ENCODE measurements at regions of chr20 and their contacts with region 1.

Region 1: GRCh38 chr20:45456632-45457031 is 12.9 kb upstream of the WFDC2 start:
- DNase-seq: peak; percentile 68 to 73
- H3K4me3 ChIP-seq: no peak overlapping the region
- H3K4me3 Mint-ChIP-seq: no peak overlapping the region
- H3K27ac Mint-ChIP-seq: no peak overlapping the region
- H3K4me1 ChIP-seq: no peaks in the 10 kb centered on the region
- H3K4me1 Mint-ChIP-seq: no peaks in the 10 kb centered on the region
- H3K27me3 ChIP-seq: no peaks in the 10 kb centered on the region
- H3K27me3 Mint-ChIP-seq: no peaks in the 10 kb centered on the region
- CTCF ChIP-seq: peak in 1 of 2 experiments; percentile 60

Region 2: GRCh38 chr20:45229264-45230056 is 227.2 kb before region 1 on chr20:
- CTCF ChIA-PET with region 1: interaction called, 10 read pairs
- POLR2A ChIA-PET with region 1: no interaction called
- intact Hi-C with region 1: no loop called
- DNase-seq: peak; percentile 68 to 81
- H3K4me3 ChIP-seq: no peak overlapping the region
- H3K4me3 Mint-ChIP-seq: peak overlapping the region; percentile 18
- H3K27ac Mint-ChIP-seq: no peak overlapping the region
- H3K4me1 ChIP-seq: no peaks in the 10 kb centered on the region
- H3K4me1 Mint-ChIP-seq: no peaks in the 10 kb centered on the region
- H3K27me3 ChIP-seq: no peaks in the 10 kb centered on the region
- H3K27me3 Mint-ChIP-seq: peaks cover 33% of the 10 kb centered on the region
- CTCF ChIP-seq: peak; percentile 83 to 93

Region 3: DNA sequence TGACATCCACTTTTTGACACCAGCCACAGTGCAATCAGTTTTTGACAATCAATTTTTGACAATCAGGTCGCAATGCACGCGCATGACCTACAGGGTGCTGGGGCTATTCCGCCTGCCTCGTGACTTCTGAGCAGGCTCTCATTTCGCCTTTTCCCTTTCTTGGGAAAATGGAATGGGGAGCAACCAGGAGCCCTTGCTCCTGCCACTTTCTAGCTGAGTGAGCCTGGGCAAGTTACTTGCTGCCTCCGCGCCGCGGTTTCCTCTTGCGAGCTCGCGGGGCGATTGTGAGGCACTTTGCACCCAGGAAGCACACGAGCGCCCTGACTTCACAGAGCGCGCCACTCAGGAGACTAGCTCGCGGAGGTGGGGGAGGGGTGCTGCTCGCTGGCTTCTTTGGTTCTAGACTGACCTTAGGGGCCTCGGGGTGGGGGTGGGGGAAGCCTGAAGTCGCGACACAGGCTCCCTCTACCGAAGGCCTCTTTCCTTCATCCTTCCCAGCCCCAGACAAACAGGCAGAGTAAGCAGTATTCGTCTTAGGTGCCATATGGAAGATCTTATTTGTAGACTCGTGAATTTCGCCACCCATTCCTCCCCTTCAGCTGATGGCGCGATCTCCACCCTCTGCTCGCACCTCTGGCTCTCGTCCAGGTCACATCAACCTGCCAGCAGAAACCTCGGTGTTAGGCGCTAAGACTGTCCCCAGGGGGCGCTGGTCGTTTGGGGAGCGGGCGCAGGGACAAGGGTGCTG is 83.1 kb before region 1 on chr20:
- CTCF ChIA-PET with region 1: interaction called, 10 read pairs
- POLR2A ChIA-PET with region 1: no interaction called
- intact Hi-C with region 1: no loop called
- DNase-seq: peak; percentile 85 to 90
- H3K4me3 ChIP-seq: no peak overlapping the region
- H3K4me3 Mint-ChIP-seq: peak overlapping the region; percentile 64
- H3K27ac Mint-ChIP-seq: no peak overlapping the region
- H3K4me1 ChIP-seq: no peaks in the 10 kb centered on the region
- H3K4me1 Mint-ChIP-seq: no peaks in the 10 kb centered on the region
- H3K27me3 ChIP-seq: no peaks in the 10 kb centered on the region
- H3K27me3 Mint-ChIP-seq: no peaks in the 10 kb centered on the region
- CTCF ChIP-seq: peak; percentile 90 to 93

Region 4: DNA sequence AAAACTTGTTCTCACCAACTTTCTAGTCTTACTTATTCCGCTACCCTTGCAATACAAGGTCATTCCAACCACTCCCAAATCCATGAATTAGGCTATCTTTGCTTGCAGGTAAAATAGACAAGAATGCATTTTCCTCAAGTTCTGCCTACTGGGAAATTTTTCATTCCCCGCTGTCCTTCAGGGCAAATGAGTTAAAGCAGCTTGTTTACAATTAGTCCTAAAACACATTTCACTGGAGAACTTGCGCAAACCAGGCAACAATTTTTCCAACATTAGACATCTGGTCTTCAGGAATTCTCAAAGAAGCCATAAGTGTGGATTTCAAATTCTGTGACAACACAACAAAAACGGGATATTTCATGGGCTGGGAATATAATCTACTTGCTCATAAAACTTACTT is 285.9 kb after region 1 on chr20:
- CTCF ChIA-PET with region 1: no interaction called
- POLR2A ChIA-PET with region 1: no interaction called
- intact Hi-C with region 1: no loop called
- DNase-seq: no peak
- H3K4me3 ChIP-seq: no peak overlapping the region
- H3K4me3 Mint-ChIP-seq: no peak overlapping the region
- H3K27ac Mint-ChIP-seq: no peak overlapping the region
- H3K4me1 ChIP-seq: no peaks in the 10 kb centered on the region
- H3K4me1 Mint-ChIP-seq: no peaks in the 10 kb centered on the region
- H3K27me3 ChIP-seq: no peaks in the 10 kb centered on the region
- H3K27me3 Mint-ChIP-seq: peaks cover 12% of the 10 kb centered on the region
- CTCF ChIP-seq: no peak